HepG2 (cell line): ENCODE measurements at regions of chr6 and their contacts with region 1.

Region 1: GRCh38 chr6:67224989-67225388 is 1410.1 kb upstream of the ADGRB3 start:
- DNase-seq: no peak
- ATAC-seq: no peak
- H3K4me3 ChIP-seq: no peak overlapping the region
- H3K27ac ChIP-seq: no peak overlapping the region
- H3K4me1 ChIP-seq: no peaks in the 10 kb centered on the region
- H3K27me3 ChIP-seq: no peaks in the 10 kb centered on the region
- CTCF ChIP-seq: no peak
- EP300 ChIP-seq: no peak
- POLR2A ChIP-seq: no peak
- RAD21 ChIP-seq: no peak

Region 2: DNA sequence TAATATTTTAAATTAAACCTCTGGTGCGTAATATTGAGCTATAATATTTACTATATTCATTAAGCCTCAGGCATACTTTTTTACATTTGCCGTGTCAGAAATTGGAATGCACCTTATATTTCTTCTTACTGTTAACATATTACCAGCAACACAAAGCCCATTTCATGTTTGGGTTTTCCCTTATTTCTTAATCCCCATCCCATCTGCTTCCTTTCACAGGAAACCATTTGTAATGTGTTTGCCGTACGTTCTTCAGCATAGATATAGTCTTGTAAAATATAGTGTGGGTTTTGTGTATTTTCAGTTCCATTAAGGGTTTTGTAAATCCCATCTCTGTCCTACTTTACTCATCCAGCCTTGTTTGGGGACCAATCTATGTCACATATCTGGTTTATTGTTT is 1524.4 kb before region 1 on chr6:
- CTCF ChIA-PET with region 1: no interaction called
- POLR2A ChIA-PET with region 1: no interaction called
- in situ Hi-C with region 1: no loop called
- intact Hi-C with region 1: no loop called
- DNase-seq: no peak
- ATAC-seq: no peak
- H3K4me3 ChIP-seq: no peak overlapping the region
- H3K27ac ChIP-seq: no peak overlapping the region
- H3K4me1 ChIP-seq: no peaks in the 10 kb centered on the region
- H3K27me3 ChIP-seq: no peaks in the 10 kb centered on the region
- CTCF ChIP-seq: no peak
- EP300 ChIP-seq: no peak
- POLR2A ChIP-seq: no peak
- RAD21 ChIP-seq: no peak

Region 3: GRCh38 chr6:67244037-67244436 is 19.0 kb after region 1 on chr6:
- CTCF ChIA-PET with region 1: no interaction called
- POLR2A ChIA-PET with region 1: no interaction called
- in situ Hi-C with region 1: no loop called
- intact Hi-C with region 1: loop called (anchors 1 kb)
- DNase-seq: no peak
- ATAC-seq: no peak
- H3K4me3 ChIP-seq: no peak overlapping the region
- H3K27ac ChIP-seq: no peak overlapping the region
- H3K4me1 ChIP-seq: no peaks in the 10 kb centered on the region
- H3K27me3 ChIP-seq: no peaks in the 10 kb centered on the region
- CTCF ChIP-seq: no peak
- EP300 ChIP-seq: no peak
- POLR2A ChIP-seq: no peak
- RAD21 ChIP-seq: no peak

Region 4: DNA sequence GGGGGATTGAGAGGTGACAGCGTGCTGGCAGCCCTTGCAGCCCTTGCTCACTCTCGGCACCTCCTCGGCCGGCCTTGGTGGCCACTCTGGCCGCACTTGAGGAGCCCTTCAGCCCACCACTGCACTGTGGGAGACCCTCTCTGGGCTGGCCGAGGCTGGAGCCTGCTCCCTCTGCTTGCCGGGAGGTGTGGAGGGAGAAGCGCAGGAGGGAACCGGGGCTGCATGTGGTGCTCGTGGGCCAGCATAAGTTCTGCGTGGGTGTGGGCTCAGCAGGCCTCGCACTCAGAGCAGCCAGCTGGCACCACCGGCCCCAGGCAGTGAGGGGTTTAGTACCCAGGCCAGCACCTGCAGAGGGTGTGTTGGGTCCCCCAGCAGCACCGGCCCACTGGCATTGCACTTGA is 497.9 kb after region 1 on chr6:
- CTCF ChIA-PET with region 1: no interaction called
- POLR2A ChIA-PET with region 1: no interaction called
- in situ Hi-C with region 1: no loop called
- intact Hi-C with region 1: no loop called
- DNase-seq: no peak
- ATAC-seq: no peak
- H3K4me3 ChIP-seq: no peak overlapping the region
- H3K27ac ChIP-seq: no peak overlapping the region
- H3K4me1 ChIP-seq: no peaks in the 10 kb centered on the region
- H3K27me3 ChIP-seq: no peaks in the 10 kb centered on the region
- CTCF ChIP-seq: no peak
- EP300 ChIP-seq: no peak
- POLR2A ChIP-seq: no peak
- RAD21 ChIP-seq: no peak